ENCODE measurements at regions of chr4 and their contacts with region 1.

Region 1: GRCh38 chr4:85498068-85498733 is 23.3 kb downstream of the ARHGAP24 start:
- DNase-seq: peak; percentile 55 to 70 (median 66)
- ATAC-seq: peak; percentile 86 to 89
- H3K4me3 ChIP-seq: no peak overlapping the region
- H3K27ac ChIP-seq: peak overlapping the region; percentile 27
- H3K4me1 ChIP-seq: peaks cover 11% of the 10 kb centered on the region
- H3K27me3 ChIP-seq: no peaks in the 10 kb centered on the region

Region 2: GRCh38 chr4:85268961-85269360 is 229.2 kb before region 1 on chr4:
- intact Hi-C with region 1: no loop called
- DNase-seq: no peak
- ATAC-seq: no peak
- H3K4me3 ChIP-seq: no peak overlapping the region
- H3K27ac ChIP-seq: no peak overlapping the region
- H3K4me1 ChIP-seq: no peaks in the 10 kb centered on the region
- H3K27me3 ChIP-seq: no peaks in the 10 kb centered on the region

Region 3: DNA sequence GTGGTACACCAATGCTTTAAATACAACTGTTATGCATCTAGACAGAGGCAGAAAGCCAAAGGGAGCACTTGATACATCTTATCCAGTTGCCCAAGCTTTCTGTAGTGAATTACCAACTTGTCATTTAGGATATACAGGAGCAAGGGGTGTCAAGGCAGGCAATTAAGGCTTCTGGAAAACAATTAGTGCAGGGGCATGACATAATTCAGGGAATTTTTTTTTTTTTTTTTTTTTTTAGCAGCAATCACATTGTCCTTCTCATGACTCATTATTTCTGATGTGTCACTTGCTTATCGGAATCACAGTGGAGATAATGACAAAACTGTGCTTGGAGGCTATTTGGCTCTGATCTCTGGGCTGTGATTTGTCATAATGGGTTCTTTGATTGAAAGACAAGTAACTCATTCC is 236.2 kb after region 1 on chr4:
- intact Hi-C with region 1: loop called in 1 of 4 experiments (anchors 10 kb)
- DNase-seq: no peak
- ATAC-seq: peak; percentile 79 to 93
- H3K4me3 ChIP-seq: no peak overlapping the region
- H3K27ac ChIP-seq: peak overlapping the region; percentile 30
- H3K4me1 ChIP-seq: peaks cover 2% of the 10 kb centered on the region
- H3K27me3 ChIP-seq: no peaks in the 10 kb centered on the region